GM10248 (cell line): ENCODE measurements at regions of chr15 and their contacts with region 1.

Region 1: DNA sequence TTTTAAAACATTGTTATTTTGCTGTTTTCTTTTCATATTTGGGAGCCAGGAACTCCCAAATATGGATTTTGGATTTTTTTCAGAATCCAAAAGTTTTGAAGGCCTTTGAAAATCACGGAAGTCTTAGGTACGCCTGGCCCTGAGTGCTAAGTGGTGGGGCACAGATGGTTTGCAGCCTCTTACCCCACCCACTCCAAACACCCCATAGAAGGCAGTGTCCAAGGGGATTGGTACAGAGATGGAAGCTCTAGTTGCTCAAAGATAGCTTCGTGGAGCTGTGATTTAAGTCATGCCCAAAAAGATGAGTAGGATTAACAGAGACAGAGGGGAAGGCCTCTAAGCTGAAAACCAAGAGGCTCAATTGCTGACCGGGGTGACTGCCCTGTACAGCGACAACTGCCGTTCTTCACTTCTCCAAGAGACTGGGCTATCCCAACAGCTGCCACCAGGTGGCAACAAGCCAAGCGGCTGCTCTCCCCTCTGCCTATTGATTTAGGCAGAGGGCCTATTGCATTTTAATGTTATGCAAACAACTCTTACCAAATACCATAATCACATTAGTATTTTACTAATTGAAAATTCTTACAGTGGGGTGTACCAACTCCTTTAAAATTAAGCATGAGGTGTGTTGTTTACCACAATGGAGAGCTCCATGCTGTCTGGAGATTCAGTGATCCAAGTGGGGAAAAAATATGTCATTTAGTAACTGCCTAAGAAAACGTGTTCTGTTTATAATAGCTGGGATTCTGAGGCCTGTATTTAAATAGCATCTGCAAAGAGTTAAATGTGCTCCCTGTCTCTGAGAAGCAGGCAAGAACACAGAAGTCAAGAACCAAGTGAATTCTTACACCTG is 64.0 kb upstream of the C15orf61 start:
- DNase-seq: peak; percentile 82
- CTCF ChIP-seq: peak; percentile 86

Region 2: GRCh38 chr15:67411491-67411890 is 45.4 kb before region 1 on chr15:
- CTCF ChIA-PET with region 1: interaction called, 11 read pairs
- POLR2A ChIA-PET with region 1: no interaction called
- DNase-seq: no peak
- CTCF ChIP-seq: no peak

Region 3: DNA sequence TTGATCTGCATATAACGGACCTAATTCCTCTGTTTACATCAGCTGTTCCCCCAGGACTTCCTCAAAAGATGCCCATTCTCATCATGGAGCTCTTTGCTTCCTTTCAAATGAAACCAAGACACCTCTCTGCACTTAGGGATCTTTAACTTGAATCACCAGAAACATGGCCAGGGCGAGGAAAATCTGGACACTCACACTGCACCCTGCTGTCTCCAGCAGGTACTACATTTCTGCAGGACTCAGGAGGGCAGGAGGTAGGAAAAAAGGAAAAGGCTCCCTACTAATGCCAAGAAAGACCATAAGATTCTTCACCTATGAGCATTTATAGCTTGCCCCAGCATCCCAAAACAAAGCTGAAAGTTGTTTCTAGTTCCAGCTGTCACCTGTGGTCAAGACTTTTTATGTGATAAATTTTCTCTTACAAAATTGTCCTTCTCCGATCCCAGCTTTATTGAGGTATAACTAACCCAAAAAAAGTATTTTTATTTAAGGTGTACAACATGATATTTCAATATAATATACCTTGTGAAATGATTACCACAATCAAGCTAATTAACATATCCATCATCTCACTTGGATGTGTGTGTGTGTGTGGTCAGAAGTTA is 23.3 kb before region 1 on chr15:
- CTCF ChIA-PET with region 1: interaction called, 17 read pairs
- POLR2A ChIA-PET with region 1: no interaction called
- DNase-seq: peak; percentile 52
- CTCF ChIP-seq: peak; percentile 71

Region 4: DNA sequence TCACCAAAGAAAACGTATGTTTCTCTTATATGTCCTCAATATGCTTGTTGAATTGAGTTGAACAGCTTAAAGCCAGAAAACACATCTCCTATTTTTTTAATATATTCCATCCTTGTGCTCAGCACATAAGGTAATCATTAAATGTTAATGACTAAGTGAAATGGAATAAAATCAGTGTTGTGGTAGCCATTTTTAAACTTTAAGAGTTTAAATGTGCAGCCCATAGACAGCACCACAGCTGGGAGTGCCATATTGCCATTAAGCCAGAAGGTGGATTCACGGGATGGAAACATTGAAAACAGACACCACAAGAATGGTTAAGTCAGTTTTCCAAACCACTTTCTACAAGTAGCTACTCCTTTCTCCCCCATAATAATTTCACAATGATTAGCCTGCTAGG is 12.8 kb before region 1 on chr15:
- CTCF ChIA-PET with region 1: interaction called, 44 read pairs
- POLR2A ChIA-PET with region 1: no interaction called
- DNase-seq: no peak
- CTCF ChIP-seq: no peak

Region 5: DNA sequence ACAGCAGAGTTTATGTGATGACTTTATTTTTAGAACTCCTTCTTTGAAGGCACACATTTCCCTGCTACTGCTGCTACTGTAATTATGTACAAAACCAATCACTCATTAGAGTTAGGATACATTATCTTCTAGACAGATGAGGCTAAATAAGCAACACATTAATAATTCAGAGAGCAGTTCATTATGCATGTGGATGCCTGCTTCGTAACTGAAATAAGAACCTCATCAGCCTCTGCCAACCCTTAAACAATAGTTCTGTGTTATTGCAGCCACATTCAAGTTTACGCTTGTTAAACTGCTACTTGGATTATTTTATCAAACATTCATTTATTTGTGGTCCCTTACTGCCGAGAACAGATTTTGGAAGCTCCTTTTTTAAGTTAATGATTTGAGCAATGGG is 11.5 kb after region 1 on chr15:
- CTCF ChIA-PET with region 1: interaction called, 53 read pairs
- POLR2A ChIA-PET with region 1: no interaction called
- DNase-seq: no peak
- CTCF ChIP-seq: no peak

Region 6: GRCh38 chr15:67548862-67549651 is 92.2 kb after region 1 on chr15:
- CTCF ChIA-PET with region 1: no interaction called
- POLR2A ChIA-PET with region 1: no interaction called
- DNase-seq: no peak
- CTCF ChIP-seq: no peak

Region 7: DNA sequence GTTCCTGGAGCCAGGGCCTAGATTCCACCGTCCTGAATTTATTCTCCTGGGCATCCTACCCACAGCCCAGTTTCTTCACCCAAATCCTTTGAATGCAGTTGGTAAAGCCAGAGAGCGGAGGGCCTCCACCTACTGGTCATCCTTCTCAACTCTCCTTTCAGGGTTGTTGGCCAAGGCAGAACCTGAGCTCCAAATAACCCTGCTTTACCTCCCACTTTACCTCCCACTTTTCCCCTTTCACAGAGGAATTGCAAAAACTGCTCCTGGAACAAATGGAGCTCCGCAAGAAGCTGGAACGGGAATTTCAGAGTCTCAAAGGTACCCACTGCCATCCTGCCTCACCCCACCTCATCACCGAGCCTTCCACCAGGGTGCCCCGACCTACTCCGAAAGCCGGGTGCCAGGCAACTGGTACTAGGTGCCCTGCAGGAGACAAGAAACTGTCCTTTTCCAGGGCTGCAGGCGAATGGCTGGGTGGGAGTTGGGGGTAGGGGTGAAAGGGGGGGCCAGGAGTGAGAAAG is 375.2 kb after region 1 on chr15:
- CTCF ChIA-PET with region 1: interaction called, 61 read pairs
- POLR2A ChIA-PET with region 1: no interaction called
- DNase-seq: no peak
- CTCF ChIP-seq: peak; percentile 27

Region 8: DNA sequence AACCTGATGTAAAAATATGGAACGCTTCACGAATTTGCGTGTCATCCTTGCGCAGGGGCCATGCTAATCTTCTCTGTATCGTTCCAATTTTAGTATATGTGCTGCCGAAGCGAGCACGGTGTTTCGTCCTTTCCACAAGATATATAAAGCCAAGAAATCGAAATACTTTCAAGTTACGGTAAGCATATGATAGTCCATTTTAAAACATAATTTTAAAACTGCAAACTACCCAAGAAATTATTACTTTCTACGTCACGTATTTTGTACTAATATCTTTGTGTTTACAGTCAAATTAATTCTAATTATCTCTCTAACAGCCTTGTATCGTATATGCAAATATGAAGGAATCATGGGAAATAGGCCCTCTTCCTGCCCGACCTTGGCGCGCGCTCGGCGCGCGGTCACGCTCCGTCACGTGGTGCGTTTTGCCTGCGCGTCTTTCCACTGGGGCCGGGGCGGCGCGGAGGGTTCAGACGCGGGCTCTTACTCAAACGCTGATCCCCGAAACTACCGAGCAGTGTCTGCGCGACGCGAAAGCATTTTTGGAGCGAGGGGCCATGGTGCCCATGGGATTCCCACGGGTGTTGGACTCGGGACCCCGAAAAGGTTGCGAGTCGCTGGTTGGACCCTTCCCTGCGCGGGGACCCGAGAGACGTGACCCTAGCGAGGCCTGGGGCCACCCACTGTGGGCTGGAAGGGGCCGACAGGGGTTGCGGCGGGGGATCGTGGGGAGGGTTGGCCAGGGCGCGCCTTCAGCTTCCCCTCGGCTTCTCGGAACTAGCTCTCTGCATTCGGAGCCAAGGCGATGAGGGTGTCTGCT is 383.2 kb after region 1 on chr15 and contains the start of gene RNU6-1:
- CTCF ChIA-PET with region 1: interaction called, 61 read pairs
- POLR2A ChIA-PET with region 1: no interaction called
- DNase-seq: peak; percentile 91
- CTCF ChIP-seq: no peak